Mammary epithelial cell (primary cell): ENCODE measurements at regions of chr17 and their contacts with region 1.

Region 1: GRCh38 chr17:3827124-3827773 is 18.8 kb downstream of the NCBP3 start:
- DNase-seq: peak; percentile 51
- H3K4me3 ChIP-seq: no peak overlapping the region
- H3K27ac ChIP-seq: no peak overlapping the region
- H3K4me1 ChIP-seq: no peaks in the 10 kb centered on the region
- H3K27me3 ChIP-seq: no peaks in the 10 kb centered on the region
- CTCF ChIP-seq: peak; percentile 87 to 91

Region 2: DNA sequence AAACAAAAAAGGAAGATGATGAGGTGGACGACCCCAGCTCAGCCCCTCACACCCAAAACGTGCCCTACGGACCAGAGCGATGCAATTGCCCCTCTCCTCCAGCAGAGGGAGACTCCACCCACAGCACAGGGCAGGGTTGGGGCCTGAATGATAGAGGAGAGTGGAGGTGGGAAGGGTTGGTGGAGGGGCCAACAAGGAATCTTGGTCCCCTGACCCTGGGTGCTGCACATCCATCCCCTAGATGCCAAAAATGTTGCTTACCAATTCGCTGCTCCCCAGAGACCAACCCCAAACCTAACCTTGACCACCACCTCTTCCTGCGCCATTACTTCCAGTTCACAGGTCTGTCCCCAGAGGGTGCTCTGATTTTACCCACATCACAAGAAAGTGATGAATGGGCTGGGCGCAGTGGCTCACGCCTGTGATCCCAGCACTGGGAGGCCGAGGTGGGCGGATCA is 144.2 kb before region 1 on chr17:
- CTCF ChIA-PET with region 1: no interaction called
- dilution Hi-C with region 1: no loop called
- in situ Hi-C with region 1: no loop called
- intact Hi-C with region 1: loop called (anchors 2 kb)
- DNase-seq: peak; percentile 19
- H3K4me3 ChIP-seq: no peak overlapping the region
- H3K27ac ChIP-seq: no peak overlapping the region
- H3K4me1 ChIP-seq: no peaks in the 10 kb centered on the region
- H3K27me3 ChIP-seq: no peaks in the 10 kb centered on the region
- CTCF ChIP-seq: peak; percentile 91 to 95

Region 3: GRCh38 chr17:3754458-3755334 is 72.6 kb before region 1 on chr17:
- CTCF ChIA-PET with region 1: no interaction called
- dilution Hi-C with region 1: no loop called
- in situ Hi-C with region 1: no loop called
- intact Hi-C with region 1: no loop called
- DNase-seq: peak; percentile 96
- H3K4me3 ChIP-seq: peak overlapping the region; percentile 61 to 89 (median 80)
- H3K27ac ChIP-seq: peak overlapping the region; percentile 15
- H3K4me1 ChIP-seq: peaks cover 9% of the 10 kb centered on the region
- H3K27me3 ChIP-seq: no peaks in the 10 kb centered on the region
- CTCF ChIP-seq: no peak

Region 4: DNA sequence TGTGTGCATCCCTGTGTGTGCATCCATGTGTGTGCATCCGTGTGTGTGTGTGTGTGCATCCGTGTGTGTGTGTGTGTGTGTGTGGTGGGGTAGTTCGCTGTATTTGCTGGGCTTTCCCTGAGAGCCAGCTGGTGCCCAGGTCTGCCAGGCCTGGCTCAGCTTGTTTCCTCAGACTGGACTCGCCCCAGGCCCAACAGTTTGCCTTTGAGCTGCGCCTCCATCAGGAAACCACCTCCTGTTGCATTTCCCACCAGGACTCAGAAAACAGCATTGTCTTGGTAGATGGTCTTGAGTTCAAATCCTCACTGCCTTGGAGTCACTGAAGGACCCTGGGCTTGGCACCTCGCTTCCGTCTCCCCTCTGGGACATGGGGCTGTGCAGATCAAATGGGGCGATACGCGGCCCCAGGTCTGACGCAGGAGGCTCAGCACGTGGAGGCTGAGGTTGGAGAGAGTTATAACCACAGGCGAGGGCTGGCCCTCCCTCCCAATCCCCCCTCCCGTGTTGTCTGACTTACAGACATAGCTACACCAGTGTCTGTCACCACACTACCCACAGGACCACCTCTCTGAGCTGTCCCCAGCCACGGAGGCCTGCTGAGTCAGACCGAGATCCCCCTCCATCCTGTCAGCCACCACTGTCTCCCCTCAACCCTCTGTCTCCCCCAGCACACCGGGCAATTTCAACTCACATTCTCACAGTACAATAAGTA is 31.0 kb before region 1 on chr17:
- CTCF ChIA-PET with region 1: no interaction called
- dilution Hi-C with region 1: no loop called
- in situ Hi-C with region 1: no loop called
- intact Hi-C with region 1: loop called (anchors 1 kb)
- DNase-seq: no peak
- H3K4me3 ChIP-seq: no peak overlapping the region
- H3K27ac ChIP-seq: no peak overlapping the region
- H3K4me1 ChIP-seq: peaks cover 17% of the 10 kb centered on the region
- H3K27me3 ChIP-seq: no peaks in the 10 kb centered on the region
- CTCF ChIP-seq: no peak

Region 5: GRCh38 chr17:4156750-4157381 is 329.6 kb after region 1 on chr17:
- CTCF ChIA-PET with region 1: no interaction called
- dilution Hi-C with region 1: no loop called
- in situ Hi-C with region 1: no loop called
- intact Hi-C with region 1: no loop called
- DNase-seq: no peak
- H3K4me3 ChIP-seq: no peak overlapping the region
- H3K27ac ChIP-seq: no peak overlapping the region
- H3K4me1 ChIP-seq: peaks cover 18% of the 10 kb centered on the region
- H3K27me3 ChIP-seq: no peaks in the 10 kb centered on the region
- CTCF ChIP-seq: no peak